Activated CD8-positive, alpha-beta T cell treated with anti-CD3 and anti-CD28 coated beads for 36 hours (primary cell): ENCODE measurements at regions of chr11 and their contacts with region 1.

Region 1: DNA sequence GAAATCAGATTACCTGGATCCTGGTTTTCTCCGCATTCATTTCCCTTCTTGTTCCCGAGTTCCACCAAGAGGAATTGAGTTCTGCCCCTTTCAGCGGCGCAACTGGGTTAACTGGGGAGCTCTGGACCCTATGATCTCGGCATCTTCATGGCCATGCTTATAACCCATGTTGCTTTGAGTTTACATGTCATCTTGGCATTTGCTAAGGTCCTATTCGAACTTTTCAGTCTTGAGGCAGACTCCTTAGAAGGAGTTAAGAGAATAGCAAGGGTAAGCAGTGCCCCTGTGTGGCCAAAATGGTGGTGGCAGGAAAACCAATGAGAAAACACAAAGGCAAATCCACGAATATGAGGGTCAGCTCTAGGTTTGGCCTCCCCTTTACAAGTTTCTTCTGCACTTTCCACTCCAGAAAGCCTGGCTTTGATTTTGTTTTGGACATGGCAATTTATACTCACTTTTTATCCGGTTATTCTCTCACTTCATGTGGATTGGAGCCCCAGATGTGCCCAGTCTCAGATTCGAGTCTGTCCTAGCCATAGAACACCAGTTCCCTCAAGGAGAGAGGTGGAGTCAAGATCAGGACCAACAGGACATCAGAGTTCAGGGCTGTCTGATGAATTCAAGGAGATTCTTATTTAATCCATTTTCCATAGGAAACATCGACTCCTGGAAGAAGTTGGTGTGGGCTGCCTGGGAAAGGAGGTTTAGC is 55.3 kb upstream of the FBXO3 start:
- DNase-seq: peak; percentile 84
- ATAC-seq: peak; percentile 84
- H3K4me3 Mint-ChIP-seq: peak overlapping the region; percentile 55
- H3K27ac Mint-ChIP-seq: no peak overlapping the region
- H3K4me1 Mint-ChIP-seq: peaks cover 6% of the 10 kb centered on the region
- H3K27me3 Mint-ChIP-seq: peaks cover 41% of the 10 kb centered on the region
- CTCF ChIP-seq: peak; percentile 71

Region 2: DNA sequence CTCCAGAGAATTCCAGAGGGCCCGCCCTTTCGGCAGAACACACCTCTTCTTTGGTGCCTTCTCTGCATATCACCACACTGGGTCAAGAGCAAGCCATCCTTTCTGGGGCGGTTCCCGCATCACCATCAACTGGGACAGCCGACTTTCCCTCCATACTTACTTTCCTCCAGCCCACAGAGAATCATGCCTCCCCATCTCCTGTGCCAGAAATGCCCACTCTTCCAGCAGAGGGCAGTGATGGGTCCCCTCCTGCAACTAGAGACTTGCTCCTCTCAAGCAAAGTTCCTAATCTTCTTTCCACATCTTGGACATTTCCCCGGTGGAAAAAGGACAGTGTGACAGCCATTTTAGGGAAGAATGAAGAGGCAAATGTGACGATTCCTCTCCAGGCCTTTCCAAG is 286.7 kb before region 1 on chr11:
- CTCF ChIA-PET with region 1: no interaction called
- POLR2A ChIA-PET with region 1: no interaction called
- intact Hi-C with region 1: loop called (anchors 10 kb)
- DNase-seq: peak; percentile 53
- ATAC-seq: no peak
- H3K4me3 Mint-ChIP-seq: no peak overlapping the region
- H3K27ac Mint-ChIP-seq: no peak overlapping the region
- H3K4me1 Mint-ChIP-seq: no peaks in the 10 kb centered on the region
- H3K27me3 Mint-ChIP-seq: peaks cover 27% of the 10 kb centered on the region
- CTCF ChIP-seq: peak; percentile 46

Region 3: DNA sequence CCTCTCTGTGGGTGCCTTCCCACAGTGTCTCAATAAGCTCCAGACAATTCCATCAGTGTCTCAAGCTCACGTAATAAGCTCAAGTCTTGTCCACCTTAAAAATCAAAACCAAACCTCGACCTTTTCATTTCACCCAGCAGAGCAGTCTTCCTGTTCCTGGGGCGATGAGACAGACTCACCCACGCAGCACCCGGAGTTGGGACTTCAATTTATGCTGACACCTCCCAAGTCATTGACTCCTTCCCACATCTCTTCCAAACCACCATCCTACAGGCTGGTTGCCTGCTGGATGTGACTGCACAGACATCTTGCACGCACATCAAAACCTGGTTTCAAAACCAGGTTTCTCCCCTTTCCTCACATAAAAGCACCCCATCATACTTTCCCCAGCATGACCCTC is 10.3 kb before region 1 on chr11:
- CTCF ChIA-PET with region 1: interaction called, 13 read pairs
- POLR2A ChIA-PET with region 1: no interaction called
- intact Hi-C with region 1: no loop called
- DNase-seq: no peak
- ATAC-seq: no peak
- H3K4me3 Mint-ChIP-seq: no peak overlapping the region
- H3K27ac Mint-ChIP-seq: no peak overlapping the region
- H3K4me1 Mint-ChIP-seq: no peaks in the 10 kb centered on the region
- H3K27me3 Mint-ChIP-seq: peaks cover 18% of the 10 kb centered on the region
- CTCF ChIP-seq: no peak